Panc1 (cell line): ENCODE measurements at regions of chr20 and their contacts with region 1.

Region 1: GRCh38 chr20:10047427-10047826 is 12.6 kb downstream of the ANKEF1 start:
- DNase-seq: no peak
- ATAC-seq: peak; percentile 70
- H3K4me3 ChIP-seq: no peak overlapping the region
- H3K27ac ChIP-seq: no peak overlapping the region
- H3K4me1 ChIP-seq: no peaks in the 10 kb centered on the region
- H3K27me3 ChIP-seq: no peaks in the 10 kb centered on the region
- CTCF ChIP-seq: peak; percentile 32; the same call in 1 of the 2 replicates

Region 2: GRCh38 chr20:10034717-10035571 is 12.5 kb before region 1 on chr20 and contains the start of gene ANKEF1:
- CTCF ChIA-PET with region 1: interaction called, 3 read pairs
- POLR2A ChIA-PET with region 1: interaction called, 12 read pairs
- in situ Hi-C with region 1: no loop called
- intact Hi-C with region 1: no loop called
- DNase-seq: no peak
- ATAC-seq: peak; percentile 100
- H3K4me3 ChIP-seq: peak within 1 kb of the TSS; percentile 59 to 86
- H3K27ac ChIP-seq: peak within 1 kb of the TSS; percentile 70
- H3K4me1 ChIP-seq: peaks cover 3% of the 10 kb centered on the region; the same call in 1 of the 2 replicates
- H3K27me3 ChIP-seq: no peaks in the 10 kb centered on the region
- CTCF ChIP-seq: no peak
- total RNA-seq, gene ANKEF1: 6.3 TPM

Region 3: GRCh38 chr20:10105046-10105445 is 57.6 kb after region 1 on chr20:
- CTCF ChIA-PET with region 1: no interaction called
- POLR2A ChIA-PET with region 1: no interaction called
- in situ Hi-C with region 1: no loop called
- intact Hi-C with region 1: no loop called
- DNase-seq: no peak
- ATAC-seq: no peak
- H3K4me3 ChIP-seq: no peak overlapping the region
- H3K27ac ChIP-seq: no peak overlapping the region
- H3K4me1 ChIP-seq: no peaks in the 10 kb centered on the region
- H3K27me3 ChIP-seq: no peaks in the 10 kb centered on the region
- CTCF ChIP-seq: no peak